WTC11 (cell line): ENCODE measurements at regions of chr6 and their contacts with region 1.

Region 1: DNA sequence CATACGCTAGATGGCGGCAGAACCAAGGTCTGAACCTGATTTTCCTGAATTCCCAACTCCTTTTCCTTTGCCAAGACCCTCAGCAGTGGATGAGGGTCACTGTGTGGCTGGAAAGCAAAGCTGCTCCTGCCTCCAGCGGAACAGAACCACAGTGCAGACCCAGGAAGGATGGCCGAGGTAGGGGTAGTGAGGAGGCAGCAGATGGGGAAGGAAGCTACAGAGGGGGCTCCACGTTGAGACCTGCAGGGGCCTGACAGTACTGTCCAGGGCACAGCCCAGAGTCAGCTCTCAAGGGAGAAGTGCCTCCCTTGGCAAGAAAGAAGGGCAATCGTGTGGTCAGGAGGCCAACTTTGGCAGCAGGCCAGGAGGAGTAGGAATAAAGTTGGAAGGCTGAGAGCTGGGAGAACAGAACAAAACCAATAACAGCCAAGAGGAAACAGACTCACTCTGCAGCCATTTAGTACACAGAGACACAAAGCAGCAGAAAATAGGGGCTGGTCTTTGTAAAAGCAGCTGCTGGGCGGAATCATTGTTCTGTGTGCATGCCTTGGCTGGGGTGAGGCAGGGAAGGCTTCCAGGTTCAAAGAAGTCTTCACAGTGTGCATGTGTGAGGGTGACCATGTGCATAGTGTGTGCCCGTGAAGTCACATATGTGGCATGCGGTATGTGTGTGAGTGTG is 3.1 kb downstream of the GABRR2 start:
- DNase-seq: peak; percentile 70
- ATAC-seq: peak; percentile 98
- H3K4me3 Mint-ChIP-seq: no peak overlapping the region
- H3K27ac Mint-ChIP-seq: peak overlapping the region; percentile 59; the same call in 1 of the 2 replicates
- H3K4me1 Mint-ChIP-seq: peaks cover 26% of the 10 kb centered on the region
- H3K27me3 Mint-ChIP-seq: no peaks in the 10 kb centered on the region
- CTCF ChIP-seq: 0 out of 2 replicates have a peak, but pooled peaks have one; percentile 8

Region 2: GRCh38 chr6:88982720-88983119 is 329.3 kb before region 1 on chr6:
- CTCF ChIA-PET with region 1: interaction called, 14 read pairs
- POLR2A ChIA-PET with region 1: no interaction called
- DNase-seq: no peak
- ATAC-seq: peak; percentile 67
- H3K4me3 Mint-ChIP-seq: no peak overlapping the region
- H3K27ac Mint-ChIP-seq: no peak overlapping the region
- H3K4me1 Mint-ChIP-seq: no peaks in the 10 kb centered on the region
- H3K27me3 Mint-ChIP-seq: peaks cover 61% of the 10 kb centered on the region
- CTCF ChIP-seq: peak; percentile 26; the same call in 1 of the 2 replicates

Region 3: DNA sequence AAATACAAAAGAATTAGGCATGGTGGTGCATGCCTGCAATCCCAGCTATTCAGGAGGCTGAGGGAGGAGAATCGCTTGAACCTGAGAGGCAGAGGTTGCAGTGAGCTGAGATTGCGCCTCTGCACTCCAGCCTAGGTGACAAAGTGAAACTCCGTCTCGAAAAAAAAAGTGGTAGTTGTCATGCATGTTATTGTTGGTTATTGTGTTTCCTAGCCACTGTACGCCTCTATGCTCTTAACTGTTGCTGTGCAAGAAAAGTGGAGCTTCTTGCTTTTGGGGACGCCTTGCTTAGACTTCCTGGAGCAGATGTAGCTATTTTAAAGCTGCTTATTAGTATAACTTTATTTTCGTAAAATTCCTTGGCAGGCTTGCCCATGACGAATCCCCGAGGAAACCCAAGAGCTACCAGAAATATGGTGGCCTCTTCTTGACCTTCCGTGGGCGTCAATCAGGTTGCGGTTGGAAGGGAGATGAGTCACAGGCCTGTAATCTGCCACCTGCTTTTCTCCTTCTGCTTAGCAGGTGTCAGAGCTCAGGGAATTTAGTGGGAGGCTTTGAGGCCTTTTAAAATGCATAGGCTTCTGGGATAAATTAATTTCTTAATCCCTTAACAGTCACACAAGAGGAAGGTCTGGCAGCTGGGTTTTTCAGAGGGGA is 14.2 kb before region 1 on chr6:
- CTCF ChIA-PET with region 1: interaction called, 38 read pairs
- POLR2A ChIA-PET with region 1: no interaction called
- DNase-seq: no peak
- ATAC-seq: no peak
- H3K4me3 Mint-ChIP-seq: no peak overlapping the region
- H3K27ac Mint-ChIP-seq: no peak overlapping the region
- H3K4me1 Mint-ChIP-seq: peaks cover 13% of the 10 kb centered on the region
- H3K27me3 Mint-ChIP-seq: no peaks in the 10 kb centered on the region
- CTCF ChIP-seq: no peak

Region 4: GRCh38 chr6:89352278-89353117 is 40.5 kb after region 1 on chr6 and contains the start of gene UBE2J1:
- CTCF ChIA-PET with region 1: interaction called, 36 read pairs
- POLR2A ChIA-PET with region 1: interaction called, 5 read pairs
- DNase-seq: peak; percentile 84
- ATAC-seq: peak; percentile 88
- H3K4me3 Mint-ChIP-seq: peak within 1 kb of the TSS; percentile 87
- H3K27ac Mint-ChIP-seq: peak within 1 kb of the TSS; percentile 38; the same call in 1 of the 2 replicates
- H3K4me1 Mint-ChIP-seq: peaks cover 37% of the 10 kb centered on the region
- H3K27me3 Mint-ChIP-seq: peaks cover 43% of the 10 kb centered on the region
- CTCF ChIP-seq: no peak
- total RNA-seq, gene UBE2J1: 9.9 to 12.3 TPM (median 9.9 TPM) in 3 replicates

Region 5: DNA sequence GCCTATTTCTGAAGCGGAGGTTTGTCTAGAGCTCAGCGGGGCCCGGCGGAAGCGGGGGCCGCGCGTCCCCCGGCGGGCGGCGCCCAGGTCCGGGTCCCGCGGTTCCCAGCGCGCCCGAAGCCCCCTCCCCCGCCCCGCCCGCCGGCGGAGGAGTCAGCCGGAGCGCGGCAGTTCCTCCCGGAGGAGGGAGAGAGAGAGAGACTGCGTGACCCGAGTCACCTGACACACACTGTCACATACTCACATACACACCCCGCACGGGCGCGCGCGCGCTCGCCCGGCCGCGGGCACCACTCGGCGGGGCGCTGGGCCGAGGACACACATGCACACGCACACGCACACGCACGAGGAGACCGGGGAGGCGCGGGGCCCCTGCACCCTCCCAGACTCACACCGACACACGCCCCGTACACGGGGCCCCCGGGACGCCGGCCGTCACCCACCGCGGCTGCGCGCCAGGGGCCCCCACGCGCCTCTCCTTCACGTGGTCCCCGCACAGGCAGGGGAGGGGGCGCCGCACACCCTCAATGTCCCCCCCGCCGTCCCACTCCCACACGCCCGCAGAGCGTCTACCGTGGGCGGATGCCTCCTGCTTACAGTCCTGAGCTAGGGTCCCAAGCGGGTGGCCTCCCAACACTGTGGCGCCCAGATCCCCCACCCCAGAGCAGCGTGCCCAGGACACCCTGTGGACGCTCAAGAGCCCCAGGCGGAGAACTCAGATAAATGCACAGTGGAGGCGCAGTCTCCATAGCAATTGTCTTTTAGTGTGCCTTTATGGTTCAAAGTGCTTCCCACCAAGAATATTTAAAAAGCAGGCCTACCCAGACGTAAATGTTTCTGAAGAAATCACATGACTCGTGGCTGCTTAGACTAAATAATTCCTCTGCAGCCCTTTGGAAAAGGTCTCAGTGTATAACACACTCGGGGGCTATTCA is 100.3 kb after region 1 on chr6 and contains the start of gene RRAGD:
- CTCF ChIA-PET with region 1: interaction called, 15 read pairs
- POLR2A ChIA-PET with region 1: no interaction called
- DNase-seq: peak; percentile 50
- ATAC-seq: peak; percentile 38
- H3K4me3 Mint-ChIP-seq: peak within 1 kb of the TSS; percentile 86
- H3K27ac Mint-ChIP-seq: no peak within 1 kb of the TSS
- H3K4me1 Mint-ChIP-seq: peaks cover 35% of the 10 kb centered on the region
- H3K27me3 Mint-ChIP-seq: peaks cover 36% of the 10 kb centered on the region
- CTCF ChIP-seq: no peak
- total RNA-seq, gene RRAGD: 14.1 to 25.4 TPM (median 18.0 TPM) in 3 replicates

Region 6: DNA sequence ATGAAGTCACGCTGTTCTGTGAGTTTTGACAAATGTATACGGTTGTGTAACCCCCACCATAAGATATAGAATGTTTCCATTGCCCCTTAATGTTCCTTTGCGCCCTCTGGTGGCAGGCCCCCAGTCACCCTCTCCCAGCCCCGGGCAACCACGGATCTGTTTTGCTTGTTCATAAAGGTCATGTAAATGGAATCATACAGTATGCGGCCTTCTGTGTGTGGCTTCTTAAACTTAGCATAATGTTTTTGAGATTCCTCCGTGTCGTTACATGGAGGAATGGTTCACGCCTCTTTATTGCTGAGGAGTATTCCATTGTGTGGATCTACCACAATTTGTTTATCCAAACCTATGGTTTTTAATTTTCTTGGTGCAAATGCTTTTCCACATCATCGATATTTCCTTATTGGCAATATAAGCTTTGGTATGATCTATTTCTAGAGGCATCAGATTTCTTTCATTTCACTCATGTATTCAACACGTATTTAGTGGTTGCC is 298.2 kb after region 1 on chr6:
- CTCF ChIA-PET with region 1: interaction called, 18 read pairs
- POLR2A ChIA-PET with region 1: no interaction called
- DNase-seq: peak; percentile 86
- ATAC-seq: peak; percentile 77
- H3K4me3 Mint-ChIP-seq: no peak overlapping the region
- H3K27ac Mint-ChIP-seq: no peak overlapping the region
- H3K4me1 Mint-ChIP-seq: 0 out of 2 replicates have a peak, but pooled peaks cover 2% of the 10 kb centered on the region
- H3K27me3 Mint-ChIP-seq: no peaks in the 10 kb centered on the region
- CTCF ChIP-seq: peak; percentile 83